ENCODE measurements at regions of chr1 and their contacts with region 1.

Region 1: GRCh38 chr1:17624611-17625233 is 85.2 kb downstream of the ARHGEF10L start:
- DNase-seq: no peak
- H3K4me3 ChIP-seq: no peak overlapping the region
- H3K27ac ChIP-seq: peak overlapping the region; percentile 71 to 89 (median 76)
- H3K4me1 ChIP-seq: peaks cover 31 to 50% (median 41%) of the 10 kb centered on the region in 4 donors
- H3K27me3 ChIP-seq: no peaks in the 10 kb centered on the region
- CTCF ChIP-seq: no peak
- EP300 ChIP-seq: peak; percentile 16
- POLR2A ChIP-seq: no peak

Region 2: GRCh38 chr1:17370618-17371017 is 254.1 kb before region 1 on chr1:
- intact Hi-C with region 1: no loop called
- DNase-seq: no peak
- H3K4me3 ChIP-seq: no peak overlapping the region
- H3K27ac ChIP-seq: no peak overlapping the region
- H3K4me1 ChIP-seq: no peaks in the 10 kb centered on the region
- H3K27me3 ChIP-seq: peaks cover 0 to 72% (median 0%) of the 10 kb centered on the region in 4 donors
- CTCF ChIP-seq: no peak
- EP300 ChIP-seq: no peak
- POLR2A ChIP-seq: no peak

Region 3: DNA sequence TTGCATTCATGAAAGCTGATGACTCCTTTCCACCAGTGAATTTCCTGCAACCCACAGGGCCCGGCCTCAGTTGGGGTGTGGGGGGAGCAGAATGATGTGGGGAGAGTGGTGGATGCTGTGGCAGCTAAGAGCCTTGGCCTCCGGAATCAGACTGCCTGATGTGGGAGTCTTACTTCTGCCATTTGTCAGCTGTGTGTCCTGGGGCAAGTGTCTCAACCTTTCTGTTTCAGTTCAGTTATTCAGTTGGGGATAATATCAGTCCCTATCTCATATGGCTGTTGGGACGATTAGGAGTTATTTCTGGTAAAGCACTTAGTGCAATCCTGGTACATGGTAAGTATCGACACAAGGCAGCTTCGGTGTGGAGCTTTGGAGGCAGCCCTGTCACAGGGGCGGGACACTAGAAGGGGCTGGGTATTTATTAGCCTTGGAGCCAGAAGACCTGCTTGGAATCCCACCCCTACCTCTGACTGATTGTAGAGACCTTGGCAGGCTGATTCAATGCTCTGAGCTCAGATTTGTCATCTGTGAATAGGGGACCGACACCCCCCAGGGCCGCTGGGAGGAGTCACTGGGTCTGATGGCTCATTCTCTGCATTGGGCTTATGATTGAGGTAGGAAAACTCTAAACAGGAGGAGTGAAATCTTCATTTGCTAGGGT is 65.6 kb before region 1 on chr1:
- intact Hi-C with region 1: no loop called
- DNase-seq: no peak
- H3K4me3 ChIP-seq: no peak overlapping the region
- H3K27ac ChIP-seq: peak overlapping the region; percentile 92 to 98 (median 96)
- H3K4me1 ChIP-seq: peaks cover 58 to 98% (median 86%) of the 10 kb centered on the region in 4 donors
- H3K27me3 ChIP-seq: no peaks in the 10 kb centered on the region
- CTCF ChIP-seq: no peak
- EP300 ChIP-seq: no peak
- POLR2A ChIP-seq: no peak

Region 4: DNA sequence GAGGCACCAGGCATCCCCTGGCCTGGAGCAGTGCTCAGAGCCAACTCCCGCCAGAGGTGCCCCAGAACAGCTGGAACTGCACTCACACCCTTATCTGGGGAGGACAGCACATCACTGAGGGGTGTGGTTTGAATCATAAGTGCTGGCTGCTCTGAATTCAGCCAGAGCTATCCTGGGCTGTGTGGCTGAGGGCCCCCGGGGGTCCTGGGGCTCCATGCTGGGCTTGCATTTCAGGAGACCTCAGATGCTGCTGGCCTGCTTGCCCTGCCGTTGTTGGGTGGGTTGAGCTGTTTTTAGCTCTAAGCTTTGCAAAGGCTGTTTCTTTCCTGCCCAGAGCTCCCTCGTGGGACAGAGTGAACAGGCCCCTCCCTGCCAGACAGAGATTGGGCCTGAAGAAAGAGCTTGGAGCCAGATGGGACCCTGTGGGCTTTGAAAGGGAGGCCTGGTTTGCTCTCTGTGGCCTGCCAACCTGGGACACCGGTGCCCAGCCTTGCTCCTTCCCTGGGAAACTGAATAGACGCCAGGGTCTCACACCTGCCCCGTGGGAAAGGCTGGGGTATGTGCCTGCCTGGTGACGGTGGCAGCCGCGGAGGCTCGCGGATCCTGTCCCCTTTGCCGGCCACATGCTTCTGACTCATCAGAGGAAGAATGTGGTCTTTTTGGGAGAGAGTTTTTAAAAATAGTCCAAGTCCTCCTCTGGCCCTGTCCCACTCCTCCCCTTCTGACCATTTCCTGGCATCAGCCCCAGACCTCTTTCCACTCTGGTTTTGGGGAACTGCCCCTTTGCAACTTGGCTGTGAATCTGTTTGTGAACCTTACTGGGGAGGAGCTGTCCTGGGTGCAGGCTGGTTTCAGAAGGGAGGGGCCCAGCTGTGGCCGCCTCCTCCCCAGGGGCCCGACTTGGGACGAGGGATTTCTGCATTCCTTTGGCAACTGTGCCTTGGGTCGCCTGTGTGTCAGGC is 55.2 kb before region 1 on chr1:
- intact Hi-C with region 1: loop called (anchors 5 kb)
- DNase-seq: peak; percentile 97
- H3K4me3 ChIP-seq: peak overlapping the region; percentile 18 to 38 (median 26)
- H3K27ac ChIP-seq: peak overlapping the region; percentile 92 to 98 (median 96)
- H3K4me1 ChIP-seq: peaks cover 90 to 100% (median 100%) of the 10 kb centered on the region in 4 donors
- H3K27me3 ChIP-seq: no peaks in the 10 kb centered on the region
- CTCF ChIP-seq: no peak
- EP300 ChIP-seq: no peak
- POLR2A ChIP-seq: no peak

Region 5: DNA sequence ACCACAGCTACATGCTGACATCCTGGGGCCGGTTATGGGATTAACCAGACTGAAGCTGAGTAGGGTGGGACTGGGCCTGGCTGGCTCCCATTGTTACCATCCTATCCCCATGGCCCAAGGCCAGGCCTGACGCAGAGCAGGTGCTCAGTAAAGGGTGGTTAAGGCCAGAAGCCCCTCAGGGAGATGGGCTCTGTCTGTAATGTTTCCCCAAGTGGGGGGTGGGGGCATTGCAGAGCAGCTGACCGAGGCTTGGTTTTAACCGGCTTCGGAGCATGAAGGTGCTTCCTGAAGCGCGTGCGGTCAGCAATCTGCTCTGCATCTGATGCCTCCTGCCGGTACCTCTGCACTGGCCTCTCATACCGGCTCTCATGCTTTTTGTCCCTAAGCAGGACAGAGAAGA is 47.0 kb after region 1 on chr1:
- intact Hi-C with region 1: no loop called
- DNase-seq: no peak
- H3K4me3 ChIP-seq: no peak overlapping the region
- H3K27ac ChIP-seq: peak overlapping the region in 1 of 4 donors; percentile 16
- H3K4me1 ChIP-seq: peaks cover 15 to 58% (median 35%) of the 10 kb centered on the region in 4 donors
- H3K27me3 ChIP-seq: no peaks in the 10 kb centered on the region
- CTCF ChIP-seq: peak in 1 of 3 experiments; percentile 16
- EP300 ChIP-seq: no peak
- POLR2A ChIP-seq: no peak

Measured in esophagus muscularis mucosa (tissue), 4 donors.